PC-9 (cell line): ENCODE measurements at regions of chr15 and their contacts with region 1.

Region 1: DNA sequence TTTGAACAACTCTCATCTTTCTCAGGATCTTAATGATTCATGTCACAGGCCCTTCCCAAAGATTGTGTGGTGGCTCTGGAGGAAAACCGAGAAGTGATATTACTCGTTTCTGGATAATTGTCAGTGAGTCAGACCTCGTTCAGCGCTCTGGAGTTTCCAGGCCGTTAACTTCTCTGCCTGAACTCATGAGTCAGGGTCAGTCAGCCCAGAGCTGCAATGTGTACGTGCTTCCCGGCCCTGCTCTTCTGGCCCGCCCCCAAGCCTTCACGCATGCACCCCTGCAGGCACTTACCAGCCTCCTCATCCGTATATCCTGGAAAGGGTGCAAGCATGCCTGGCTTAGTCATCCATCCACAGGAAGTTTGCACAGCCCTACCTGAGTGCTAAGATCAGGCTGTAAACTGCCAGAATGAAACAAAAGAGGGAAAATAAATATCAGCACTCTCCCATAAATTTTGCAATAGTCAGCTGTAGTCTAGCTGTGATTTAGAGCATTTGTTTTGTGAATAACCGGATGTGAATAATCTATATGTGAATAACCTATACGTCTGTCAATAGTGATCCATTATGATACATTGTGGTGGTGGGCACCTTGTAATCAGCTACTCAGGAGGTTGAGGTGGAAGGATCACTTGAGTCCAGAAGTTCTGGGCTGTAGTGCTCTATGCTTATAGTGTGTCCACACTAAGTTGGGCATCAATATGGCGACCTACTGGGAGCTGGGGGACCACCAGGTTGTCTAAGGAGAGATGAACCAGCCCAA is 35.3 kb upstream of the SEMA4B start:
- DNase-seq: peak; percentile 96 to 99
- H3K4me3 ChIP-seq: peak overlapping the region; percentile 14; the same call in 1 of the 2 replicates
- H3K27ac ChIP-seq: peak overlapping the region; percentile 94
- H3K4me1 ChIP-seq: peaks cover 76% of the 10 kb centered on the region
- H3K27me3 ChIP-seq: no peaks in the 10 kb centered on the region
- CTCF ChIP-seq: no peak

Region 2: DNA sequence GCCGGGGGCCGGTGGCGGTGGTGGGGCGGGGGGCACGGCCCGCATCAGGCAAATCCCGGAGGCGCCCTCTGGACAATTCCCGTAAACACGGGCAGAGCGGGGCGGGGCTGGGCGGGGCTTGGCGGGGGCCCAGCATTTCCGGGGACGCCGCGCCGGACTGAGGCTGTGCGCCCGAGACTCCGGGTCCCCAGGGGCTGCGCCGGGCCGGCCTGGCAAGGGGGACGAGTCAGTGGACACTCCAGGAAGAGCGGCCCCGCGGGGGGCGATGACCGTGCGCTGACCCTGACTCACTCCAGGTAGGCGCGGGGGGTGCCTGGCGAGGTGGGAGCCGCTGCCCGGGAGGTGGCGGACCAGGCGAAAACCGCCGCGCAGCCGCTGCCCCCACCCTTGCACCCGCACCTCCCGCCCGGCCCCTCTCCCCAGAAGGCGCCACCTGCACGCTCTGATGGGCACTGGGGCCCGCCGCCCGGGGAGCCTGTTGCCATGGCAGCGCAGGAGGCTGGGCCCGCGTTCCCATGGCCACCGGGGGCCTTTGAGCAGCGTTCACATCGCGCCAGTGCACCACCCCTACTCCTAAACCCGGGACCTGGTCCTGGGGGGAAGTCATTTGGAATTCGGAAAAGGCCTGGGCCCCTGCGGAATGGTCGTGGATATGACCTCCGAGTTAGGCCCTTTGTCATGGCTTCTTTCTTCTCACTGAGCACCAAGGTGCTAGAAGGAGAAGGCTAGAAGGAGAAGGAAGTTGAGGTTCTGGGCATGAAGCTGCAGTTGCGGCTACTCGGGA is 19.1 kb after region 1 on chr15:
- CTCF ChIA-PET with region 1: no interaction called
- POLR2A ChIA-PET with region 1: interaction called, 11 read pairs
- intact Hi-C with region 1: loop called (anchors 1 kb)
- DNase-seq: peak; percentile 57 to 72
- H3K4me3 ChIP-seq: peak overlapping the region; percentile 71
- H3K27ac ChIP-seq: peak overlapping the region; percentile 85
- H3K4me1 ChIP-seq: peaks cover 34% of the 10 kb centered on the region
- H3K27me3 ChIP-seq: no peaks in the 10 kb centered on the region
- CTCF ChIP-seq: no peak